ENCODE measurements at regions of chr11 and their contacts with region 1.

Region 1: DNA sequence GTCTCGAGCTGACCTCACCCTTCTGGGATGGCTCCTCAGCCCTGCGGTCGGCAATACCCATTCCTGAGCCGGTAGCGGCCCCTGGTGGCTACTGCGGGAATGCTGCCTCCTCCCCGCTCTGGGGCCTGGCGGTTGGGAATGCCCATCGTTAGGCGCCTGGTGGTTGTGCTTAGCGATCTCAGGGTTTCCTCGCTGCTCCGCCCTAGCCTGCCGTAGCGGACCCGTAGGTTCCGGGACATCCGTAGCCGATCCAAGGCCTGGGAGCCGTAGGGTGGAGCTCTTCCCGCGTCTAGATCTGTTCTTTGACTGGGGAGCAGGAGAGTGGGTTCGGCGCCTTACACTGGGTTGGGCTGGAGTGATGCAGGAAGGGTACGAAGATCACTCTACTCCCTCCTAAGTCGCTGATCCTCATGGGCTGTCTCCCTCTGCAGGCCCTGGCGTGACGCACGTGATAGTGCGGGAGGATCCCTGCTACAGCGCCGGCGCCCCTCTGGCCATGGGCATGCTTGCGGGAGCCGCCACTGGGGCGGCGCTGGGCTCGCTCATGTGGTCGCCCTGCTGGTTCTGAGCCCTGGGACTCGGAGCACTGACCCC is 14.8 kb downstream of the PLEKHB1 start:
- DNase-seq: peak; percentile 70 to 91 (median 84)
- ATAC-seq: peak; percentile 95
- H3K4me3 ChIP-seq: peak overlapping the region in 1 of 2 experiments; percentile 25
- H3K4me3 Mint-ChIP-seq: peak overlapping the region; percentile 39
- H3K27ac ChIP-seq: no peak overlapping the region
- H3K27ac Mint-ChIP-seq: no peak overlapping the region
- H3K4me1 ChIP-seq: peaks cover 8% of the 10 kb centered on the region
- H3K4me1 Mint-ChIP-seq: peaks cover 17% of the 10 kb centered on the region
- H3K27me3 ChIP-seq: no peaks in the 10 kb centered on the region
- H3K27me3 Mint-ChIP-seq: no peaks in the 10 kb centered on the region
- CTCF ChIP-seq: peak; percentile 95

Region 2: DNA sequence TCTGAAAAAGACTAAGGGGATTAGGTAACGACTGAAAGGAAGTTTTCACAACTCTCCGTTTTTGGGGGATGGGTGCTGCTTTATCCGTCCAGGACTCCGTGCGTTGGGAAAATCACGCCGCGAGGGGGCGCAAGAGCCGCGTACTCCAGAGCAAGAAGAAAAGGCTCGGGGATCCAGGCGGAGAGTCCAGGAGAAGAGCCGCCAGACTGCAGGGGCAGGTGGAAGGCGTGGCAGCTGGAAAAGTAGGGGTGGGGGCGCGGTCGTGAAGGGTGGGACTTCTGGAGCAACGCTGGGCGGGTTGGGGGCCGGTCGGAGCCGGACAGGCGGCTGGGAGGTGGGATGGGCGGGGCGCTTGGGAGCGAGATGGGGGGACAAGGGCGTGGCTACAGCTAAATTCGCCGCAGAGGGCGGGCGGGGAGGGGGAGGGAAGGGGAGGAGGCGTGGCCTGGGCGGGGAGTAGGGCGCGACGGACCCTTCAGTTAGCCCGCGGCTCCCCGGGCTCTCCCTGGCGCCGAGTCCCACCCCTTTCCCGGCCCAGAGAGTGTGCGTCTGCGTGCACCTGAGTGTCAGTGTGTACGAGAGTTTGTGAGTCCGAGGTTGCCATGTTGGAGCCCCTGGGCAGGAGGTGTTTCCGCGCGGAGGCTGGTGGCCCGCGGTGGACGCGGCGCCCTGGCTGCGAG is 353.7 kb before region 1 on chr11:
- CTCF ChIA-PET with region 1: interaction called, 3 read pairs
- POLR2A ChIA-PET with region 1: no interaction called
- intact Hi-C with region 1: loop called in 1 of 2 experiments (anchors 2 kb)
- DNase-seq: peak; percentile 77 to 94 (median 89)
- ATAC-seq: peak; percentile 71
- H3K4me3 ChIP-seq: peak overlapping the region; percentile 62 to 77
- H3K4me3 Mint-ChIP-seq: peak overlapping the region; percentile 86
- H3K27ac ChIP-seq: no peak overlapping the region
- H3K27ac Mint-ChIP-seq: no peak overlapping the region
- H3K4me1 ChIP-seq: peaks cover 9% of the 10 kb centered on the region
- H3K4me1 Mint-ChIP-seq: peaks cover 10% of the 10 kb centered on the region
- H3K27me3 ChIP-seq: peaks cover 11 to 12% of the 10 kb centered on the region in 2 experiments
- H3K27me3 Mint-ChIP-seq: peaks cover 15% of the 10 kb centered on the region
- CTCF ChIP-seq: peak; percentile 46

Region 3: DNA sequence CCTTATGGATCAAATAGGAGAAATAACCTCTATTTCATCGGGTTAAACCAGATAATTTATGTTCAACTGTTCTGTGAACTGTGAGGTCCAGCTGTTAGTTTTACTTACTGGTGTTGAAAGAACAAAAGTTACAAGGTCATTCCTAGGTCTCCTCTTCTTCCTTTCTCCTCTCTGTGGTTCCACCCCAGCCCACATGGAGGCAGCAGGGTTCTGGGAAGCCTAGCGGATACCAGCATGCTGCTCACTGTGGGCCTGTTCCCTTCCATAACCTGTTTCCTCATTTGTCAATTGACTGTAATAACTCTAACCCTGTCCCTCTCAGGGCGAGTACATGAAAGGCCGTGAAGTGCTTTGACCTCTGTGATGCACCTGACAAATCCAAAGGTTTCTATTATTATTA is 257.1 kb before region 1 on chr11:
- CTCF ChIA-PET with region 1: interaction called, 12 read pairs
- POLR2A ChIA-PET with region 1: no interaction called
- intact Hi-C with region 1: loop called in 1 of 2 experiments (anchors 2 kb)
- DNase-seq: peak in 1 of 9 experiments; percentile 22
- ATAC-seq: no peak
- H3K4me3 ChIP-seq: no peak overlapping the region
- H3K4me3 Mint-ChIP-seq: no peak overlapping the region
- H3K27ac ChIP-seq: no peak overlapping the region
- H3K27ac Mint-ChIP-seq: no peak overlapping the region
- H3K4me1 ChIP-seq: no peaks in the 10 kb centered on the region
- H3K4me1 Mint-ChIP-seq: no peaks in the 10 kb centered on the region
- H3K27me3 ChIP-seq: no peaks in the 10 kb centered on the region
- H3K27me3 Mint-ChIP-seq: no peaks in the 10 kb centered on the region
- CTCF ChIP-seq: no peak

Region 4: GRCh38 chr11:73538381-73538872 is 122.7 kb before region 1 on chr11:
- CTCF ChIA-PET with region 1: no interaction called
- POLR2A ChIA-PET with region 1: no interaction called
- intact Hi-C with region 1: no loop called
- DNase-seq: peak in 2 of 9 experiments; percentile 25 to 35
- ATAC-seq: peak; percentile 57
- H3K4me3 ChIP-seq: no peak overlapping the region
- H3K4me3 Mint-ChIP-seq: peak overlapping the region; percentile 36
- H3K27ac ChIP-seq: peak overlapping the region in 1 of 2 experiments; percentile 1
- H3K27ac Mint-ChIP-seq: peak overlapping the region; percentile 86
- H3K4me1 ChIP-seq: peaks cover 13% of the 10 kb centered on the region
- H3K4me1 Mint-ChIP-seq: peaks cover 39% of the 10 kb centered on the region
- H3K27me3 ChIP-seq: no peaks in the 10 kb centered on the region
- H3K27me3 Mint-ChIP-seq: no peaks in the 10 kb centered on the region
- CTCF ChIP-seq: no peak

Region 5: GRCh38 chr11:73633999-73634398 is 27.1 kb before region 1 on chr11:
- CTCF ChIA-PET with region 1: interaction called, 35 read pairs
- POLR2A ChIA-PET with region 1: no interaction called
- intact Hi-C with region 1: no loop called
- DNase-seq: peak in 1 of 9 experiments; percentile 35
- ATAC-seq: peak; percentile 52
- H3K4me3 ChIP-seq: no peak overlapping the region
- H3K4me3 Mint-ChIP-seq: no peak overlapping the region
- H3K27ac ChIP-seq: peak overlapping the region in 1 of 2 experiments; percentile 39
- H3K27ac Mint-ChIP-seq: peak overlapping the region; percentile 66
- H3K4me1 ChIP-seq: peaks cover 13% of the 10 kb centered on the region
- H3K4me1 Mint-ChIP-seq: peaks cover 14% of the 10 kb centered on the region
- H3K27me3 ChIP-seq: no peaks in the 10 kb centered on the region
- H3K27me3 Mint-ChIP-seq: no peaks in the 10 kb centered on the region
- CTCF ChIP-seq: no peak

Region 6: GRCh38 chr11:73647459-73648100 is 13.6 kb before region 1 on chr11:
- CTCF ChIA-PET with region 1: interaction called, 46 read pairs
- POLR2A ChIA-PET with region 1: interaction called, 4 read pairs
- intact Hi-C with region 1: no loop called
- DNase-seq: peak; percentile 89 to 97 (median 94)
- ATAC-seq: peak; percentile 99
- H3K4me3 ChIP-seq: peak overlapping the region; percentile 55 to 79
- H3K4me3 Mint-ChIP-seq: peak overlapping the region; percentile 90
- H3K27ac ChIP-seq: peak overlapping the region; percentile 42 to 58
- H3K27ac Mint-ChIP-seq: peak overlapping the region; percentile 94
- H3K4me1 ChIP-seq: peaks cover 19% of the 10 kb centered on the region
- H3K4me1 Mint-ChIP-seq: peaks cover 24% of the 10 kb centered on the region
- H3K27me3 ChIP-seq: peaks cover 0 to 4% of the 10 kb centered on the region in 2 experiments
- H3K27me3 Mint-ChIP-seq: no peaks in the 10 kb centered on the region
- CTCF ChIP-seq: no peak

Measured in CD8-positive, alpha-beta T cell (primary cell).